ENCODE measurements at regions of chr1 and their contacts with region 1.

Region 1: DNA sequence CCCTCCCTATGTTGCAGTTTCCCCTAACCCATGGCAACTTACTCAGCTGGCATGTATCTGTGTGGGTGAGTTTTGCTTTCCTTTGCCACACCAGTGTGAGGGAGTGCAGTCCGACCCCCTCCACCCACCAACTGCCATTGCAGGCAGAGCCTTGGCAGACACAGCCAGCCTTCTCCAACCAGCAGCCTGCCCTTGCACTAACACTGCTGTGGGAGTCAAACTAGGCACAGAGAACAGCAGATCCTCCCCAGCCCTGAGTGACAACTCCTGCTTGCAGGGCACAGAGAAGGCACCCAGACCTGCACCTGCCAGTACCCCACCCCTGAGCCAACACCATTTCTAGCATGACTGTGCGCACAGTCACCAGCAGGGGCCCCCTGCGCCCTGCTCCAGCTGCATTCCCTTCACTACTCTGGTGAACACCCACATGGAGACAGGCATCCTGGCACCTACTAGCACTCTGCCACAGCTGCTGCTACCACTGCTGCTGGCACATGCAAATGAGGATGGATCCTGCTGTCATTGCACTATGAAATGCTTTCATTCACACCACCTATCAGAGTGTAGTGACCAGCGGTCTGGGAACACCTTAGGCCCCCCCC is 98.4 kb downstream of the MAGI3 start:
- DNase-seq: peak; percentile 20
- H3K4me3 ChIP-seq: no peak overlapping the region
- H3K27ac ChIP-seq: no peak overlapping the region
- H3K4me1 ChIP-seq: no peaks in the 10 kb centered on the region
- H3K27me3 ChIP-seq: no peaks in the 10 kb centered on the region
- CTCF ChIP-seq: peak in 1 of 2 donors; percentile 55

Region 2: DNA sequence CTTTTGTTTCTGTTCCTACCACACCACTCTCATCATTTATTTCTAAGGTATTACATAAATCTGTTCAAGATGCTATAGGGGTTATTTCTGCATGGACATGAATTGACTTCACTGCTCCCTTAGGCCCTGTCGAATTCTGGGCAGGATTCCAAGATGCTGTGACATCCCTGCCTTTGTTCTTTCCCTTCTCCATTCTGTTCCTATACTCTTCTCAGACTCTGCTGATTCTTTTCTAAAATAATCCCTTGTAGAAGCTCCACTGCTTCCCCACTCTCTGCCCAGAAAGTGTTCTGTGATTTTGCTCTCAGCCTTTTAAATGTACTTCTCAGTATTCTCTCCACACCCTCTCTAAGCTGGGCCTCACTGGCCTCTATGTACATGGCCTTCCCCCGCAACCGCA is 171.4 kb after region 1 on chr1:
- CTCF ChIA-PET with region 1: no interaction called
- dilution Hi-C with region 1: no loop called
- in situ Hi-C with region 1: loop called in 1 of 2 experiments (anchors 25 kb)
- intact Hi-C with region 1: no loop called
- DNase-seq: no peak
- H3K4me3 ChIP-seq: no peak overlapping the region
- H3K27ac ChIP-seq: no peak overlapping the region
- H3K4me1 ChIP-seq: peaks cover 24% of the 10 kb centered on the region
- H3K27me3 ChIP-seq: no peaks in the 10 kb centered on the region
- CTCF ChIP-seq: no peak

Measured in mammary epithelial cell (primary cell).